ENCODE measurements at regions of chr4 and their contacts with region 1.

Region 1: GRCh38 chr4:163554870-163555465 is 60.5 kb downstream of the TMA16 start:
- DNase-seq: peak in 3 of 14 experiments; percentile 50 to 52 (median 52)
- ATAC-seq: no peak
- H3K4me3 ChIP-seq: no peak overlapping the region
- H3K4me3 Mint-ChIP-seq: no peak overlapping the region
- H3K27ac ChIP-seq: no peak overlapping the region
- H3K27ac Mint-ChIP-seq: no peak overlapping the region
- H3K4me1 ChIP-seq: peaks cover 22% of the 10 kb centered on the region
- H3K4me1 Mint-ChIP-seq: peaks cover 58% of the 10 kb centered on the region
- H3K27me3 ChIP-seq: no peaks in the 10 kb centered on the region
- H3K27me3 Mint-ChIP-seq: no peaks in the 10 kb centered on the region
- CTCF ChIP-seq: peak; percentile 94

Region 2: GRCh38 chr4:163256680-163257343 is 298.2 kb before region 1 on chr4:
- CTCF ChIA-PET with region 1: no interaction called
- POLR2A ChIA-PET with region 1: no interaction called
- intact Hi-C with region 1: no loop called
- DNase-seq: no peak
- ATAC-seq: no peak
- H3K4me3 ChIP-seq: no peak overlapping the region
- H3K4me3 Mint-ChIP-seq: no peak overlapping the region
- H3K27ac ChIP-seq: no peak overlapping the region
- H3K27ac Mint-ChIP-seq: no peak overlapping the region
- H3K4me1 ChIP-seq: no peaks in the 10 kb centered on the region
- H3K4me1 Mint-ChIP-seq: no peaks in the 10 kb centered on the region
- H3K27me3 ChIP-seq: peaks cover 0 to 5% of the 10 kb centered on the region in 2 experiments
- H3K27me3 Mint-ChIP-seq: peaks cover 17% of the 10 kb centered on the region
- CTCF ChIP-seq: no peak

Region 3: GRCh38 chr4:163367651-163368050 is 187.3 kb before region 1 on chr4:
- CTCF ChIA-PET with region 1: no interaction called
- POLR2A ChIA-PET with region 1: no interaction called
- intact Hi-C with region 1: no loop called
- DNase-seq: no peak
- ATAC-seq: no peak
- H3K4me3 ChIP-seq: no peak overlapping the region
- H3K4me3 Mint-ChIP-seq: no peak overlapping the region
- H3K27ac ChIP-seq: no peak overlapping the region
- H3K27ac Mint-ChIP-seq: no peak overlapping the region
- H3K4me1 ChIP-seq: no peaks in the 10 kb centered on the region
- H3K4me1 Mint-ChIP-seq: no peaks in the 10 kb centered on the region
- H3K27me3 ChIP-seq: no peaks in the 10 kb centered on the region
- H3K27me3 Mint-ChIP-seq: peaks cover 27% of the 10 kb centered on the region
- CTCF ChIP-seq: no peak

Region 4: DNA sequence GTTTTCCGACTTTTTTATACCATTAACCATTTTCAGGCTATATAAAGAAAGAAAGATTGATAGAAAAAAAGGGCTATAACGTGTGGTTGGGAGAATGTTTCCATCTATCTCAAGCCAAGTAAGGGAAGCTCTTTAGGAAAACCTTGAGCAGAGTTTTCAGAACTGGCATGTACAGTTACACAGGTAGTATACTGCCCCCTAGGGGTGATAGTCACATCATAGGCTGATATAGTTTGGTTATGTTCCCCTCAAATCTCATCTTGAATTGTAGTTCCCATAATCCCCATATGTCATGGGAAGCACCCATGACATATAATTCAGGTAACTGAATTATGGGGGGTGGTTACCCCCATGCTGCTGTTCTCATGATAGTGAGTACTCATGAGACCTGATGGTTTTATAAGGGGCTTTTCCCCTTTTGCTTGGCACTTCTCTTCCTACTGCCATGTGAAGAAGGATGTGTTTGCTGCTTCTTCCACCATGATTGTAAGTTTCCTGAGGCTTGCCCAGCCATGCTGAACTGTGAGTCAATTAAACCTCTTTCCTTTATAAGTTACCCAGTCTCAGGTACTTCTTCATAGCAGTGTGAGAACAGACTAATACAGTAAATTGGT is 126.3 kb after region 1 on chr4:
- CTCF ChIA-PET with region 1: interaction called, 14 read pairs
- POLR2A ChIA-PET with region 1: interaction called, 3 read pairs
- intact Hi-C with region 1: loop called (anchors 1 to 2 kb)
- DNase-seq: peak in 7 of 14 experiments; percentile 2 to 82 (median 47)
- ATAC-seq: peak; percentile 74
- H3K4me3 ChIP-seq: no peak overlapping the region
- H3K4me3 Mint-ChIP-seq: no peak overlapping the region
- H3K27ac ChIP-seq: no peak overlapping the region
- H3K27ac Mint-ChIP-seq: no peak overlapping the region
- H3K4me1 ChIP-seq: no peaks in the 10 kb centered on the region
- H3K4me1 Mint-ChIP-seq: peaks cover 7% of the 10 kb centered on the region
- H3K27me3 ChIP-seq: no peaks in the 10 kb centered on the region
- H3K27me3 Mint-ChIP-seq: no peaks in the 10 kb centered on the region
- CTCF ChIP-seq: peak; percentile 77

Region 5: DNA sequence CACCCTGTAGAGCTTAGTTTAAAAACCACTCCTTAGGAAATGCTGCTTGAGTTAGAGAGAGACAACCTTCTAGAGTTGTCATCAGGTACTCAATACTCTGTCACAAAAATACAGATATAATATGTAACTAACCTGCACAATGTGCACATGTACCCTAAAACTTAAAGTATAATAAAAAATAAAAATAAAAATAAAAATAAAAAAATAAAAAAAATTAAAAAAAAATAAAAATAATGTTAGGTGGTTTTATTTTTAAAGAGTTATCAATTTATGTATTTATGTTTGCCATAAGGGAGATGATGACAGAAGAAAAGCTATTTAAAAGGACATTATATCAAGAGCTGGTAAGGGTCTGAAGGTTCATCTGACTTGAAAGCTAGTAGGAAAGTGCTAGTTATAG is 337.4 kb after region 1 on chr4:
- CTCF ChIA-PET with region 1: no interaction called
- POLR2A ChIA-PET with region 1: interaction called, 3 read pairs
- intact Hi-C with region 1: loop called in 1 of 2 experiments (anchors 5 kb)
- DNase-seq: no peak
- ATAC-seq: no peak
- H3K4me3 ChIP-seq: no peak overlapping the region
- H3K4me3 Mint-ChIP-seq: no peak overlapping the region
- H3K27ac ChIP-seq: no peak overlapping the region
- H3K27ac Mint-ChIP-seq: no peak overlapping the region
- H3K4me1 ChIP-seq: no peaks in the 10 kb centered on the region
- H3K4me1 Mint-ChIP-seq: peaks cover 42% of the 10 kb centered on the region
- H3K27me3 ChIP-seq: no peaks in the 10 kb centered on the region
- H3K27me3 Mint-ChIP-seq: no peaks in the 10 kb centered on the region
- CTCF ChIP-seq: no peak

Region 6: GRCh38 chr4:164731827-164732474 is 1177.0 kb after region 1 on chr4:
- CTCF ChIA-PET with region 1: interaction called, 16 read pairs
- POLR2A ChIA-PET with region 1: no interaction called
- intact Hi-C with region 1: loop called (anchors 1 to 2 kb)
- DNase-seq: peak; percentile 7 to 67 (median 33)
- ATAC-seq: peak; percentile 71
- H3K4me3 ChIP-seq: no peak overlapping the region
- H3K4me3 Mint-ChIP-seq: no peak overlapping the region
- H3K27ac ChIP-seq: no peak overlapping the region
- H3K27ac Mint-ChIP-seq: no peak overlapping the region
- H3K4me1 ChIP-seq: no peaks in the 10 kb centered on the region
- H3K4me1 Mint-ChIP-seq: no peaks in the 10 kb centered on the region
- H3K27me3 ChIP-seq: peaks cover 0 to 10% of the 10 kb centered on the region in 2 experiments
- H3K27me3 Mint-ChIP-seq: peaks cover 28% of the 10 kb centered on the region
- CTCF ChIP-seq: peak; percentile 90

Region 7: GRCh38 chr4:165096776-165097175 is 1541.8 kb after region 1 on chr4:
- CTCF ChIA-PET with region 1: no interaction called
- POLR2A ChIA-PET with region 1: no interaction called
- intact Hi-C with region 1: loop called in 1 of 2 experiments (anchors 10 kb)
- DNase-seq: peak in 2 of 14 experiments; percentile 16 to 17
- ATAC-seq: no peak
- H3K4me3 ChIP-seq: no peak overlapping the region
- H3K4me3 Mint-ChIP-seq: no peak overlapping the region
- H3K27ac ChIP-seq: no peak overlapping the region
- H3K27ac Mint-ChIP-seq: no peak overlapping the region
- H3K4me1 ChIP-seq: no peaks in the 10 kb centered on the region
- H3K4me1 Mint-ChIP-seq: no peaks in the 10 kb centered on the region
- H3K27me3 ChIP-seq: no peaks in the 10 kb centered on the region
- H3K27me3 Mint-ChIP-seq: no peaks in the 10 kb centered on the region
- CTCF ChIP-seq: peak; percentile 44

Measured in CD4-positive, alpha-beta T cell (primary cell).